CD8-positive, alpha-beta T cell (primary cell): ENCODE measurements at regions of chr1 and their contacts with region 1.

Region 1: GRCh38 chr1:174022080-174022975 is at the start of gene RC3H1:
- DNase-seq: peak; percentile 79 to 93 (median 89)
- ATAC-seq: peak; percentile 95
- H3K4me3 ChIP-seq: peak within 1 kb of the TSS; percentile 83 to 94
- H3K4me3 Mint-ChIP-seq: peak within 1 kb of the TSS; percentile 95
- H3K27ac ChIP-seq: peak within 1 kb of the TSS; percentile 84 to 93
- H3K27ac Mint-ChIP-seq: peak within 1 kb of the TSS; percentile 98
- H3K4me1 ChIP-seq: peaks cover 30% of the 10 kb centered on the region
- H3K4me1 Mint-ChIP-seq: peaks cover 45% of the 10 kb centered on the region
- H3K27me3 ChIP-seq: no peaks in the 10 kb centered on the region
- H3K27me3 Mint-ChIP-seq: no peaks in the 10 kb centered on the region
- CTCF ChIP-seq: no peak
- total RNA-seq, gene RC3H1: 40.2 to 41.4 TPM

Region 2: DNA sequence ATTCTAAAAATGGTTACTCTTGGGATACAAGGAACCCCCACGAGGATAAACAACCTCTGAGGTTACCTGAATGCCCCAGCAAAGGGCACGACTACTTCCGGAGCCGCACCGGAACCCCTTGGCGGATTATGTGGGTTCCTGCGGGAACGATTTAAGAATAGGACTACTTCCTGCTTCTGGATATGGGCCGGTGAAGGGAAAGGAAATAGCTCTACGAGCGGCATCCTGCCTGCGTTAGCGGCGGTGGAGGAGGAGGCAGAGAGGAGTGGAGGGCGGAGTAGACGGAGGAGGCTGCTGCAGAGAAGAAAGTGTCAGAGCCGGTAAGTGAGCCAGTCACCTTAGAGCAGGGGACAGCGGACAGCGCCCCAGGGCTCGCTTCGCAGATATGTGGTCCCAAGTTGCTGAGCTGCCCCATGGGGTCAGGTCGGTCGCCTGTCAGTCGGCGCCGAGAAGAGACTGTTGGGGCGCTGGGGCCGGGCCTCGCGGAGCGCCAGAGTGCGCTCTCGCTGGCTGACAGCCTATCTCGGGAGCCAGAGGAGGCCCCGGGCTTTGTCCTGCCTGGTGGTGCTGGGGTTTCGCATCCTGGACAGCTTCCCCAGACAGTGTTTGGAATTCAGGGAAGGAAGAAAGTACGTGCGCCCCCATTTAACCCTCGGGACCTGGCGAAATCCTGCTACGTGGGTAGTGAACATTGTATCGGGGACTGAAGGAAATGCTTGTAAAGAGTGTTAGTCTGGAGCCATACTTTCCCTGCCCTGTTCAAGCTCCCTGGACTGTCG is 307.4 kb before region 1 on chr1 and contains the start of gene KLHL20:
- CTCF ChIA-PET with region 1: no interaction called
- POLR2A ChIA-PET with region 1: no interaction called
- intact Hi-C with region 1: loop called (anchors 2 to 5 kb)
- DNase-seq: peak; percentile 72 to 94 (median 83)
- ATAC-seq: peak; percentile 98
- H3K4me3 ChIP-seq: peak within 1 kb of the TSS; percentile 80 to 86
- H3K4me3 Mint-ChIP-seq: peak within 1 kb of the TSS; percentile 96
- H3K27ac ChIP-seq: peak within 1 kb of the TSS; percentile 76 to 87
- H3K27ac Mint-ChIP-seq: peak within 1 kb of the TSS; percentile 97
- H3K4me1 ChIP-seq: peaks cover 24% of the 10 kb centered on the region
- H3K4me1 Mint-ChIP-seq: peaks cover 38% of the 10 kb centered on the region
- H3K27me3 ChIP-seq: peaks cover 0 to 2% of the 10 kb centered on the region in 2 experiments
- H3K27me3 Mint-ChIP-seq: peaks cover 7% of the 10 kb centered on the region
- CTCF ChIP-seq: no peak
- total RNA-seq, gene KLHL20: 27.9 to 29.0 TPM

Region 3: DNA sequence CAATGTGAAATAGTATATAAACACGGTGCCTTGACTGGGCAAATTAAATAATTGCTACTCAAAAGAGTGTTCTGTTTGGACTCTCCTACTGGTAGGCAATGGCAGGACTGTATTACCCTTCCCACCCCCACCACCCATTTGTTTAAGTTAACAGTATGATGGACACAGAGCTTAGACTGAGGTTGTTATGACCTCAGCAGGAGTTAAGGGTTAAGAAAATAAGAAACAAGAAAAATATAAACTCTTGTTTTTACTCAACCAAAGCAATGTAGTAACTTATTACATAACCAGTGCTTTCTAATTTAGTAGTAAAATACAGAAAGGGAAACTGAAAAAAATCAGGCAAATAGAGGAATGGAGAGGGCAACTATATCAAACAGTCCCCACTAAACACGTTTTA is 85.3 kb before region 1 on chr1:
- CTCF ChIA-PET with region 1: no interaction called
- POLR2A ChIA-PET with region 1: no interaction called
- intact Hi-C with region 1: no loop called
- DNase-seq: no peak
- ATAC-seq: no peak
- H3K4me3 ChIP-seq: no peak overlapping the region
- H3K4me3 Mint-ChIP-seq: no peak overlapping the region
- H3K27ac ChIP-seq: no peak overlapping the region
- H3K27ac Mint-ChIP-seq: no peak overlapping the region
- H3K4me1 ChIP-seq: no peaks in the 10 kb centered on the region
- H3K4me1 Mint-ChIP-seq: no peaks in the 10 kb centered on the region
- H3K27me3 ChIP-seq: no peaks in the 10 kb centered on the region
- H3K27me3 Mint-ChIP-seq: no peaks in the 10 kb centered on the region
- CTCF ChIP-seq: no peak

Region 4: GRCh38 chr1:173954179-173954578 is 68.1 kb before region 1 on chr1:
- CTCF ChIA-PET with region 1: no interaction called
- POLR2A ChIA-PET with region 1: no interaction called
- intact Hi-C with region 1: no loop called
- DNase-seq: no peak
- ATAC-seq: no peak
- H3K4me3 ChIP-seq: no peak overlapping the region
- H3K4me3 Mint-ChIP-seq: no peak overlapping the region
- H3K27ac ChIP-seq: no peak overlapping the region
- H3K27ac Mint-ChIP-seq: no peak overlapping the region
- H3K4me1 ChIP-seq: no peaks in the 10 kb centered on the region
- H3K4me1 Mint-ChIP-seq: peaks cover 10% of the 10 kb centered on the region
- H3K27me3 ChIP-seq: no peaks in the 10 kb centered on the region
- H3K27me3 Mint-ChIP-seq: no peaks in the 10 kb centered on the region
- CTCF ChIP-seq: no peak